ENCODE measurements at regions of chr1 and their contacts with region 1.

Region 1: GRCh38 chr1:50774759-50775351 is 185.2 kb downstream of the FAF1 start:
- DNase-seq: peak; percentile 11
- ATAC-seq: peak; percentile 79
- H3K4me3 ChIP-seq: no peak overlapping the region
- H3K27ac ChIP-seq: no peak overlapping the region
- H3K4me1 ChIP-seq: no peaks in the 10 kb centered on the region
- H3K27me3 ChIP-seq: no peaks in the 10 kb centered on the region
- CTCF ChIP-seq: peak; percentile 50 to 65 (median 53)
- EP300 ChIP-seq: no peak
- POLR2A ChIP-seq: no peak
- RAD21 ChIP-seq: peak; percentile 79

Region 2: GRCh38 chr1:50750021-50750619 is 24.7 kb before region 1 on chr1:
- CTCF ChIA-PET with region 1: interaction called, 17 read pairs
- POLR2A ChIA-PET with region 1: no interaction called
- RAD21 ChIA-PET with region 1: no interaction called
- SMC1A ChIA-PET with region 1: interaction called, 3 read pairs
- in situ Hi-C with region 1: no loop called
- intact Hi-C with region 1: no loop called
- DNase-seq: no peak
- ATAC-seq: peak; percentile 29; the same call in 1 of the 3 replicates
- H3K4me3 ChIP-seq: no peak overlapping the region
- H3K27ac ChIP-seq: no peak overlapping the region
- H3K4me1 ChIP-seq: no peaks in the 10 kb centered on the region
- H3K27me3 ChIP-seq: no peaks in the 10 kb centered on the region
- CTCF ChIP-seq: peak in 2 of 3 experiments; percentile 19 to 26; a peak in 1 of 6 replicates
- EP300 ChIP-seq: no peak
- POLR2A ChIP-seq: no peak
- RAD21 ChIP-seq: peak; percentile 33; the same call in 1 of the 2 replicates

Region 3: DNA sequence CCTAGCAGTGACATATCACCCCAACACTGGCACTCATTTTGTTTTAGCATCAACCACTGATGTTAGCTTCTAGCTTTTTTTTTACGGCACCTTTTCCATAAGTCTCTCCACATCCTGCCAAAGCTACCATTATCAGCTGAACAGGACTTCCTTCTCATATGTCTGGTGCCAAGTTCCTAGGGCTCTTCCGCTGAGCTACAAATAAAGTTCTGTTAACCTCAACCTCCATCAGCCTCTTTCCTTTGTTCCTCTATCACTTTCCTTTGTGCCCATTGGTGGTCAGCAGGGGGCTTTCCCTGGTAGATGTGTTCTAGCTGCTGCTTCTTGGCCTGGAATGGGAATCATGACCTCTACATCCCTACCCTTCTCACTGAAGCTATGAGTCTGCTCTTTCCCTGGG is 21.4 kb after region 1 on chr1:
- CTCF ChIA-PET with region 1: interaction called, 29 read pairs
- POLR2A ChIA-PET with region 1: no interaction called
- RAD21 ChIA-PET with region 1: no interaction called
- SMC1A ChIA-PET with region 1: interaction called, 7 read pairs
- in situ Hi-C with region 1: no loop called
- intact Hi-C with region 1: no loop called
- DNase-seq: no peak
- ATAC-seq: no peak
- H3K4me3 ChIP-seq: no peak overlapping the region
- H3K27ac ChIP-seq: no peak overlapping the region
- H3K4me1 ChIP-seq: peaks cover 8% of the 10 kb centered on the region; the same call in 1 of the 2 replicates
- H3K27me3 ChIP-seq: no peaks in the 10 kb centered on the region
- CTCF ChIP-seq: no peak
- EP300 ChIP-seq: no peak
- POLR2A ChIP-seq: no peak
- RAD21 ChIP-seq: no peak

Region 4: GRCh38 chr1:50873458-50874187 is 98.8 kb after region 1 on chr1:
- CTCF ChIA-PET with region 1: interaction called, 56 read pairs
- POLR2A ChIA-PET with region 1: no interaction called
- RAD21 ChIA-PET with region 1: interaction called, 9 read pairs
- SMC1A ChIA-PET with region 1: interaction called, 42 read pairs
- in situ Hi-C with region 1: no loop called
- intact Hi-C with region 1: loop called (anchors 2 kb)
- DNase-seq: peak; percentile 76
- ATAC-seq: peak; percentile 99
- H3K4me3 ChIP-seq: no peak overlapping the region
- H3K27ac ChIP-seq: peak overlapping the region; percentile 29; the same call in 1 of the 2 replicates
- H3K4me1 ChIP-seq: peaks cover 9% of the 10 kb centered on the region
- H3K27me3 ChIP-seq: no peaks in the 10 kb centered on the region
- CTCF ChIP-seq: peak; percentile 62 to 90 (median 62)
- EP300 ChIP-seq: no peak
- POLR2A ChIP-seq: no peak
- RAD21 ChIP-seq: peak; percentile 73

Region 5: GRCh38 chr1:51044834-51045233 is 270.0 kb after region 1 on chr1:
- CTCF ChIA-PET with region 1: interaction called, 5 read pairs
- POLR2A ChIA-PET with region 1: no interaction called
- RAD21 ChIA-PET with region 1: no interaction called
- SMC1A ChIA-PET with region 1: no interaction called
- in situ Hi-C with region 1: loop called (anchors 10 kb)
- intact Hi-C with region 1: no loop called
- DNase-seq: no peak
- ATAC-seq: no peak
- H3K4me3 ChIP-seq: no peak overlapping the region
- H3K27ac ChIP-seq: no peak overlapping the region
- H3K4me1 ChIP-seq: no peaks in the 10 kb centered on the region
- H3K27me3 ChIP-seq: no peaks in the 10 kb centered on the region
- CTCF ChIP-seq: no peak; a peak in 1 of 6 replicates
- EP300 ChIP-seq: no peak
- POLR2A ChIP-seq: no peak
- RAD21 ChIP-seq: peak; percentile 43

Region 6: DNA sequence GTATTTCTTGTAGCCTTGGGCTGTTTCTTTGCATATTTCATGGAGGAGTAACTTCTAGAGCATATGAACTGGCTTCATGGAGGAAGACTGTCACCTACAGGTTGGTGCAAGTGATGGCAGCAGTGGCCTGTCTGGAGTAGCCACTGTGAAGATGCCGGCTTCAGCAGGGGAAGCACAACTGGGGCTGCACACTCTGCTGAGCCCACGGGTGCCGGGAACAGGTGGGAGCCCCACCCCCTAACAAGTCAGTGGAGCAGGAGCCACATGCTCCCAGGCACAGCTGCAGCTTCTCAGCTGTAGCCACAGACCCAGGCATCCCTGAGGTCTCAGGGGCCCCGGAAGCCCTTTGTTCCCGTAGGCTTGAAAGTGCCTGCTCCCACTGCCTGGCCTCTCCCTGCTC is 284.0 kb after region 1 on chr1:
- CTCF ChIA-PET with region 1: interaction called, 9 read pairs
- POLR2A ChIA-PET with region 1: no interaction called
- RAD21 ChIA-PET with region 1: no interaction called
- SMC1A ChIA-PET with region 1: no interaction called
- in situ Hi-C with region 1: no loop called
- intact Hi-C with region 1: loop called (anchors 10 kb)
- DNase-seq: peak; percentile 12
- ATAC-seq: peak; percentile 73
- H3K4me3 ChIP-seq: no peak overlapping the region
- H3K27ac ChIP-seq: no peak overlapping the region
- H3K4me1 ChIP-seq: no peaks in the 10 kb centered on the region
- H3K27me3 ChIP-seq: no peaks in the 10 kb centered on the region
- CTCF ChIP-seq: peak; percentile 47 to 68 (median 61)
- EP300 ChIP-seq: no peak
- POLR2A ChIP-seq: no peak
- RAD21 ChIP-seq: peak; percentile 67

Region 7: DNA sequence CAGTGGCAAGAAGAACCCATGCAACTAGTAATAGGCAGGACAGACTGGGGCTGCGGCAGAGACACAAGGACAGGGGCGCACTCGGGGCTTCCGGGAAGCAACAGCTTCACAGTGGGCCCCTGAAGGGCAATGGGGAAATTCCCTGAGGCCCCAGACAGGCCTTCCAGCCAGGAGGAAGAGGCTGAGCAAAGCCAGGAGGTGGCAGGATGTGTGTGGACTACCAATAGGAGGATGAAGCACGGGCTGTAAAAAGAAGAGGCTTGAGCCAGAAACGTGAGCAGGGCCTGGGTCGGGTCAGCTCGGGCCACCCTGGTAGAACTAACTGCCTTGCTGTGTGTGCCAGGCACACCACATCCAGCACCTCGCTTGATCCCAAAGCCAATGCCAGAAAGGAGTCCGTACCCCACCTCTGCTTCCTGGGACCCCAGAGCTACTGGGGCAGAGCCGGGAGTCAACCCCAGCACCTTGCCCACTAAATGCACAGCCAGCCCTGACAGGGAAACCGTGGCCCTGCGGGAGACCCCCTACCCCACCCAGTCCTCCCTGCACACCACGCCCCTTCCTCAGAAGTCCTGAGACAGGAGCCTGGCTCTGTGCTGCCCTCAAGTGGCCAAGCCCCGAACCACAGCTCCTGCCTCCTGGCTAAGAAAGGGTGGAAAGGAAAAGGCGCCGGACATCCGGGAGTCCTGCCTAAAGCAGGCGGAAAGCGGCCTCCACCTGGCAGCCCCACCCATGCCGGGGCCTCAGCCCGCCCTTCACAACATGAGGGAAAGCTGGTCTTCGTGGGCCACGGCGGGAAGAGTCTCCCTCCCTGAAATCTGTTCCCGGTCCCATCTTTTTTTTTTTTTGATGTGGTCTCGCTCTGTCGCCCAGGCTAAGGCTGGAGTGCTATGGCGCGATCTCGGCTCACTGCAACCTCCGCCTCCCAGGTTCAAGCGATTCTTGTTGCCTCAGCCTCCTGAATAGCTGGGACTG is 521.8 kb after region 1 on chr1:
- CTCF ChIA-PET with region 1: interaction called, 13 read pairs
- POLR2A ChIA-PET with region 1: no interaction called
- RAD21 ChIA-PET with region 1: interaction called, 3 read pairs
- SMC1A ChIA-PET with region 1: no interaction called
- in situ Hi-C with region 1: no loop called
- intact Hi-C with region 1: no loop called
- DNase-seq: peak; percentile 51
- ATAC-seq: peak; percentile 81
- H3K4me3 ChIP-seq: peak overlapping the region; percentile 62; the same call in 1 of the 2 replicates
- H3K27ac ChIP-seq: peak overlapping the region; percentile 23; the same call in 1 of the 2 replicates
- H3K4me1 ChIP-seq: peaks cover 32% of the 10 kb centered on the region
- H3K27me3 ChIP-seq: no peaks in the 10 kb centered on the region; a peak in 1 of 4 replicates
- CTCF ChIP-seq: peak; percentile 92 to 99 (median 97)
- EP300 ChIP-seq: 0 out of 4 replicates have a peak, but pooled peaks of 1 of the 2 experiments have one; percentile 16
- POLR2A ChIP-seq: no peak; the same call in 1 of the 2 replicates
- RAD21 ChIP-seq: peak; percentile 97

Measured in GM12878 (cell line).